HepG2 (cell line): ENCODE measurements at regions of chr3 and their contacts with region 1.

Region 1: DNA sequence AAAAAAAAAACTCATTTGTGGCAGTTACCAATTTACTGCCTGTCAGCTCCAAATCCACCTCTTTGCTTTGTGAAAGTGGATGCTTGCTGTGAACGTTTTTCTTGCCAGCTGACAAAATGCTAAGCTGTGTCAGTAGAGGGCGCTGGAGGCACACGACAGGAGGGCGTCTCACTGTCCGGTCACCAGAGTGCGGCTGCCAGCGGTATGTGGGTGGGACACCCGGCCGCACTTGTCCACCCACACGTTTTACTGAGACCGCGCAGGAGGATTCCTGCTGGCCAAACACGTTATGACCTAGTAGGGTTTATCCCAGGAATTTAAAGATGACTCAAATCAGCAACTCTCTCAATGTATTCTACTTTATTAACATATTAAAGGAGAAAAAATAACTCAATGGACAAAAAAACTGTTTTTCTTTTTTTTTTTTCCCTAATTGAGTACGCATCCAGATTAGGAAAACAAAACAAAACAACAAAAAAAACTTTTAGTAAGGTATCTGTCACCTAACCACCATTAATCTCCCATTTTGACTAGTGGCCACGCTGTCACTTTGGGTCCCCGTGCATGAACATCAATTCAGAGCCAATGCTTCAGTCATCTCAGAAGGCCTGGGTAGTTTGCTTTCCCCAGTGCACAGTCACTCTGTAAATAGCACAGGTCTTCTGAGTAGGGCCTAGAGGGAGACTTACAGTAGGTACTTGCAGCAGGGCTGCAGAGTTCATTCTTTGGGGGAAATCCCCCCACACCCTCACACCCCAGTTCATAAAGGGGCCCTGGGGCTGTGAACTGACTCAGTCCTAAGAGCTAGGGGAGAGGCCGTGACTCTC is 43.8 kb upstream of the RPL35A start:
- DNase-seq: peak; percentile 83
- ATAC-seq: peak; percentile 100
- H3K4me3 ChIP-seq: no peak overlapping the region
- H3K27ac ChIP-seq: no peak overlapping the region
- H3K4me1 ChIP-seq: no peaks in the 10 kb centered on the region
- H3K27me3 ChIP-seq: no peaks in the 10 kb centered on the region
- CTCF ChIP-seq: peak; percentile 97
- EP300 ChIP-seq: no peak
- POLR2A ChIP-seq: no peak
- RAD21 ChIP-seq: peak; percentile 91

Region 2: DNA sequence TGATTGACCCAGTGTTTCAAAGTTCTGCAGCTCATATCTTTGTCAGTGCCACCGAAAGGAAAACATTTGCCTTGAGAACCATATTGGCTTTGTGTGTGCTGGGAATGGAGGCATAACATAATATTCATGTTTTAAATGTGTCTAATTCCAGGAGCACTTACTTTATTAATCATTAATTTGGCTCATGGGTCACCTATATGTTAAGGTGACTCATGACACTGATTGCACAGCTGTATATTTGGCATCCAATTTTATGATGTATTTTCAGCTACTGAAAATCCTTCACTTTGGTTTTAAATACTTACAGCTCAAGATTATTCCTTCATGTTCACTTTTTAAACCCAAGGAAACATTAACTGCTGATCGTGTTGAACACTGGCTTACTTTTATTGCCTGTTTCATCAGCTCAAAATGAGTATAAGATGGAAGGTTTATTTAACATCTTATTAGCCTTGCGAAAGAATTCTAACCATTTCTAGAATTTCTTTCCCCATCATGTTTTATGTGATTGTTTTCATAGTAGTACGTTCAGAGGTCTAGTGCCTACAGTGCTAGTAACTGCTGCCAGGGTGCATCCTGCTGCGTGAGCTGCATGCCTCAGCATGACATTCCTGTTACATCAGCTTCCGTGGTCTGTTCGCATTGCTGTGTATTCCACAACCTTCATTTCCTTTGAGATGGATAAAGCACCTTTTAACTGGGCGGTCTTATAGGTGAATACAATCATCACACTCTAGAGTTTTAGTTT is 51.5 kb before region 1 on chr3:
- CTCF ChIA-PET with region 1: no interaction called
- POLR2A ChIA-PET with region 1: no interaction called
- in situ Hi-C with region 1: no loop called
- intact Hi-C with region 1: no loop called
- DNase-seq: no peak
- ATAC-seq: no peak
- H3K4me3 ChIP-seq: no peak overlapping the region
- H3K27ac ChIP-seq: no peak overlapping the region
- H3K4me1 ChIP-seq: no peaks in the 10 kb centered on the region
- H3K27me3 ChIP-seq: no peaks in the 10 kb centered on the region
- CTCF ChIP-seq: no peak
- EP300 ChIP-seq: no peak
- POLR2A ChIP-seq: no peak
- RAD21 ChIP-seq: no peak

Region 3: GRCh38 chr3:197878427-197878826 is 27.8 kb before region 1 on chr3:
- CTCF ChIA-PET with region 1: no interaction called
- POLR2A ChIA-PET with region 1: no interaction called
- in situ Hi-C with region 1: no loop called
- intact Hi-C with region 1: no loop called
- DNase-seq: no peak
- ATAC-seq: no peak
- H3K4me3 ChIP-seq: no peak overlapping the region
- H3K27ac ChIP-seq: no peak overlapping the region
- H3K4me1 ChIP-seq: peaks cover 26% of the 10 kb centered on the region
- H3K27me3 ChIP-seq: no peaks in the 10 kb centered on the region
- CTCF ChIP-seq: no peak
- EP300 ChIP-seq: no peak
- POLR2A ChIP-seq: no peak
- RAD21 ChIP-seq: no peak

Region 4: GRCh38 chr3:197942956-197943556 is 36.8 kb after region 1 on chr3:
- CTCF ChIA-PET with region 1: interaction called, 29 read pairs
- POLR2A ChIA-PET with region 1: no interaction called
- in situ Hi-C with region 1: loop called (anchors 5 kb)
- intact Hi-C with region 1: loop called (anchors 1 kb)
- DNase-seq: no peak
- ATAC-seq: peak; percentile 70
- H3K4me3 ChIP-seq: no peak overlapping the region
- H3K27ac ChIP-seq: no peak overlapping the region
- H3K4me1 ChIP-seq: no peaks in the 10 kb centered on the region
- H3K27me3 ChIP-seq: no peaks in the 10 kb centered on the region
- CTCF ChIP-seq: peak; percentile 67
- EP300 ChIP-seq: no peak
- POLR2A ChIP-seq: no peak
- RAD21 ChIP-seq: no peak

Region 5: DNA sequence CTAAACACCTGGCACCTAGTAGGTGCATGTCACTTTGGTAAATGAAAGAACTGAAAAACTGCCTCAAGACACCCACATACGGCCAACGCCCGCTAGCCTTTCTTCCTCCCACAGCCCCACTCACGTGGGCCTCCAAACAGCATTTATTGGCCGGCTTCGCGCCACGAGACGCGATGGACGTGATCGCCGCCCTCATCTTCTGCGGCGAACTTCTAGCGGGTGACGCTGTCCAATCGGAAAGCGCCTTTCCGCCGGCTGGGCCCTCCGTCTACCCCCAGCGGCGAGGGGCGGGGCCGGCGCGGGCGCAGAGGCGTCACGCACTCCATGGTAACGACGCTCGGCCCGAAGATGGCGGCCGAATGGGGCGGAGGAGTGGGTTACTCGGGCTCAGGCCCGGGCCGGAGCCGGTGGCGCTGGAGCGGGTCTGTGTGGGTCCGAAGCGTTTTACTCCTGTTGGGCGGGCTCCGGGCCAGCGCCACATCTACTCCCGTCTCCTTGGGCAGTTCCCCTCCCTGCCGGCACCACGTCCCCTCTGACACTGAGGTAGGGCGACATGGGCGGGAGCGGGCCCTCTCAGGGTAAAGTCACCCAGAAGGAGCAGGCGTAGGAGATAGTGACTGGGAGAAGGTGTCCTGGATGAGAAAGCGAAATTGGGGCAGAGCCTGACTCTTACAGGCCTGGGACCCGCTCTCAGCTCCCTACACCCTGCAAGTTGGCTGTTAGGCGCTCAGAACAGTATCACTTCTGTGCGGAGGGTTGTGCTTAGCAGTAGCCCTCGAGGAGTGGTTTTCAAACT is 53.9 kb after region 1 on chr3 and contains the start of gene LMLN:
- CTCF ChIA-PET with region 1: no interaction called
- POLR2A ChIA-PET with region 1: no interaction called
- in situ Hi-C with region 1: no loop called
- intact Hi-C with region 1: no loop called
- DNase-seq: peak; percentile 86
- ATAC-seq: peak; percentile 87
- H3K4me3 ChIP-seq: peak within 1 kb of the TSS; percentile 76 to 88 (median 81)
- H3K27ac ChIP-seq: peak within 1 kb of the TSS; percentile 60
- H3K4me1 ChIP-seq: peaks cover 49% of the 10 kb centered on the region
- H3K27me3 ChIP-seq: no peaks in the 10 kb centered on the region; a peak in 1 of 5 replicates
- CTCF ChIP-seq: no peak
- EP300 ChIP-seq: 0 out of 4 replicates have a peak, but pooled peaks of 1 of the 2 experiments have one; percentile 25
- POLR2A ChIP-seq: peak; percentile 68 to 81; a peak in 3 of 4 replicates
- RAD21 ChIP-seq: peak; percentile 35; the same call in 1 of the 2 replicates
- total RNA-seq, gene LMLN: 1.1 and 1.2 TPM in 2 replicates

Region 6: GRCh38 chr3:198079771-198080520 is 173.7 kb after region 1 on chr3:
- CTCF ChIA-PET with region 1: interaction called, 3 read pairs
- POLR2A ChIA-PET with region 1: no interaction called
- in situ Hi-C with region 1: no loop called
- intact Hi-C with region 1: loop called (anchors 10 kb)
- DNase-seq: no peak
- ATAC-seq: peak; percentile 53
- H3K4me3 ChIP-seq: peak overlapping the region; percentile 34 to 66 (median 47); a peak in 4 of 6 replicates
- H3K27ac ChIP-seq: no peak overlapping the region
- H3K4me1 ChIP-seq: peaks cover 8% of the 10 kb centered on the region; the same call in 1 of the 2 replicates
- H3K27me3 ChIP-seq: peaks cover 1 to 26% of the 10 kb centered on the region in 2 experiments; a peak in 4 of 5 replicates
- CTCF ChIP-seq: no peak
- EP300 ChIP-seq: no peak
- POLR2A ChIP-seq: no peak
- RAD21 ChIP-seq: no peak